ENCODE measurements at regions of chr10 and their contacts with region 1.

Region 1: DNA sequence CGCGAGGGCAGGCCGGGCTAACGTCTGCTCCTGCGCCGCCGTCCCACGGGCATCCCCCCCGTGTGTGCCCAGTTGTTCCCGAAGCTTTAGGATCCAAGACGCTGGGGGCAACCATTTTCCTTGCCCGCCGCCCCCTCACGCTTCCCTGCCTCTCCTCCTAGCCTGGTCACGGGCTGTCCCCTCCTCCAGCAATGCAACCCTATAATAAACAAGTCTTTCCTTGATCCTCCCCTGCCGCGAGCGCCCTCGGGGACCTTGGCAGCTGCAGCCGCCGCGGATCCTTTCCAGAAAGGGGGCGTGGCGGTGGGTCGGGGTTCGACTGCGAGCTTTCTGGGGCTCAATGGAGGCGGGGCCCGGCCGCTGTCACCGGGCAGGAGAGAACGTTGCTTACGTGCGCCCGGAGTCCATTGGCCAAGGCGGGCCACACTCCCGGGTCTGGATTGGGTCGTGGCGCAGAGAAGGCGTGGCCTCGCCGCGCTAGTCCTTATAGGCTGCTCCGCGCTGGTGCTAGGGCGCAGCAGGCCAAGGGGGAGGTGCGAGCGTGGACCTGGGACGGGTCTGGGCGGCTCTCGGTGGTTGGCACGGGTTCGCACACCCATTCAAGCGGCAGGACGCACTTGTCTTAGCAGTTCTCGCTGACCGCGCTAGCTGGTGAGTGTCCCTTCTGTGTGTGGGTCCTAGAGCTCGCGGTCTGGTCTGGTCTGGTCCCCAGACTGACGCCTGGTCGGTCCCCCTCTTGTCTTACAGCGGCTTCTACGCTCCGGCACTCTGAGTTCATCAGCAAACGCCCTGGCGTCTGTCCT is at the start of gene DDIT4:
- DNase-seq: peak; percentile 99
- H3K4me3 ChIP-seq: peak within 1 kb of the TSS; percentile 37 to 68 (median 66)
- H3K27ac ChIP-seq: peak within 1 kb of the TSS; percentile 59
- H3K4me1 ChIP-seq: peaks cover 23% of the 10 kb centered on the region
- H3K27me3 ChIP-seq: no peaks in the 10 kb centered on the region
- CTCF ChIP-seq: no peak
- POLR2A ChIP-seq: peak; percentile 100
- total RNA-seq, gene DDIT4: 53.0 and 60.4 TPM in 2 replicates

Region 2: DNA sequence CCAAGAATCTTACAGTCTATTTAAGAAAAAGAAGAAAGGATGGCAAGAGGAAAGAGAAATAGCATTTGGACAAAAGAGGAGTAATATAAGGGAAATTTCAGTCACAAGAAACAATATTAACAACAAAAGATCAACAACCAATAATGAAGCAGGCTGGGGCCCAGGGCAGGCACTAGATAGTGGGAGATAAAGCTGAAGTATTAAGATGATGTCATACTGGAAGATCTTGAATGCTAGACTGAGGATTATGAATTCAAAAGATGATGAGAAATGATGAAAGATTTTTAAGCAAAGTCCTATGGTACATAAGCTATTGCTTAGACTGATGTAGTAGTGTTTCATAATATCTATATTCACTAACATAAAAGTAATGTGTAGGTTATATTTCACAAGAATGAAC is 133.4 kb before region 1 on chr10:
- CTCF ChIA-PET with region 1: no interaction called
- POLR2A ChIA-PET with region 1: no interaction called
- dilution Hi-C with region 1: no loop called
- intact Hi-C with region 1: no loop called
- DNase-seq: no peak
- H3K4me3 ChIP-seq: no peak overlapping the region
- H3K27ac ChIP-seq: no peak overlapping the region
- H3K4me1 ChIP-seq: no peaks in the 10 kb centered on the region
- H3K27me3 ChIP-seq: no peaks in the 10 kb centered on the region
- CTCF ChIP-seq: no peak
- POLR2A ChIP-seq: no peak

Region 3: GRCh38 chr10:72223743-72224101 is 49.9 kb before region 1 on chr10:
- CTCF ChIA-PET with region 1: interaction called, 10 read pairs
- POLR2A ChIA-PET with region 1: interaction called, 8 read pairs
- dilution Hi-C with region 1: no loop called
- intact Hi-C with region 1: loop called (anchors 1 kb)
- DNase-seq: peak; percentile 59
- H3K4me3 ChIP-seq: no peak overlapping the region
- H3K27ac ChIP-seq: peak overlapping the region; percentile 67
- H3K4me1 ChIP-seq: peaks cover 11% of the 10 kb centered on the region
- H3K27me3 ChIP-seq: no peaks in the 10 kb centered on the region
- CTCF ChIP-seq: no peak
- POLR2A ChIP-seq: no peak

Region 4: GRCh38 chr10:72254813-72255568 is 18.6 kb before region 1 on chr10:
- CTCF ChIA-PET with region 1: interaction called, 13 read pairs
- POLR2A ChIA-PET with region 1: interaction called, 23 read pairs
- dilution Hi-C with region 1: no loop called
- intact Hi-C with region 1: loop called (anchors 1 kb)
- DNase-seq: peak; percentile 52
- H3K4me3 ChIP-seq: no peak overlapping the region
- H3K27ac ChIP-seq: peak overlapping the region; percentile 42
- H3K4me1 ChIP-seq: peaks cover 13% of the 10 kb centered on the region
- H3K27me3 ChIP-seq: no peaks in the 10 kb centered on the region
- CTCF ChIP-seq: no peak
- POLR2A ChIP-seq: peak; percentile 51

Region 5: GRCh38 chr10:72297968-72298773 is 24.6 kb after region 1 on chr10:
- CTCF ChIA-PET with region 1: interaction called, 15 read pairs
- POLR2A ChIA-PET with region 1: interaction called, 22 read pairs
- dilution Hi-C with region 1: no loop called
- intact Hi-C with region 1: loop called (anchors 1 kb)
- DNase-seq: peak; percentile 97
- H3K4me3 ChIP-seq: peak overlapping the region in 2 of 3 experiments; percentile 34 to 44
- H3K27ac ChIP-seq: peak overlapping the region; percentile 88
- H3K4me1 ChIP-seq: peaks cover 15% of the 10 kb centered on the region
- H3K27me3 ChIP-seq: no peaks in the 10 kb centered on the region
- CTCF ChIP-seq: no peak
- POLR2A ChIP-seq: no peak

Region 6: DNA sequence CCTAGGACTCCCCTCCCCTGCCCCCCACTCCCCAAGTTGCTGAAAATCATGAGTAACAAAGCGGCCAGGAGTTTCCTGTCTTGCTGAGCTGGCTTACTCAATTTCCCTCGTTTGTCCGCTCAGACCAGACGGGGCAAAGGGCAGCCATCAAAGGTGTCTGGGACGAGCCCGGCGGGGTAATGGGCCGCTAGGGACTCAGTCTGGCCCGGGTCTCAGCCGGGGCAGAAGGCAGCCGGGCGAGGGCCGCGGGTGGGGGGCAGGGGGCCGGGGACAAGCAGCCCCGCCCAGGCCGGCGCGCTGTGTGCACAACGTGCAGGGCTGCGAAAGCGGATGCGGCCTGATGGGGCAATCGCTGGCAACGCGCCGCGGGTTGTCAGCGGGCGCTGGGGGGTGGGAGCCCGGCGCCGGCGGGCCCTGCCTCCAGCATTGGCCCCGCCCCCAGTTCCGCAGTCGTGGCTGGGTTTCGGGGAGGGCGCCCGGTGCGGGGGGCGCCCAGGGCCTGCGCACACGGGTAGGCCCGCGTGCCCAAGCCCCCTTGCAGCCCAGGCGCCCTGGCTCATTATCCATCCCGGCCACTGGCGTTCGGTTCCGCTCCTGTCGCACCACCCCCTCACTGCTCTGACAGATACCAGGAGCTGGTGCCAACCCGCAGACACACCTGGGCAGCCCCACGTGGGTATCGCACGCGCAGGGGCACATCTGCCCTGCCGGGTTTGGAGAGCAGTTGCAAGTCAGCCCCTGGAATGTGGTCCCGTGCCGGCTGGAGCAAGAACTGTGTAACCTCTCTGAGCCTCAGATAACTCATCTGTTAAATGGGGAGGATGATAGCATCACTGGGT is 46.0 kb after region 1 on chr10:
- CTCF ChIA-PET with region 1: interaction called, 72 read pairs
- POLR2A ChIA-PET with region 1: interaction called, 59 read pairs
- dilution Hi-C with region 1: no loop called
- intact Hi-C with region 1: loop called (anchors 1 kb)
- DNase-seq: peak; percentile 98
- H3K4me3 ChIP-seq: no peak overlapping the region
- H3K27ac ChIP-seq: peak overlapping the region; percentile 100
- H3K4me1 ChIP-seq: peaks cover 69% of the 10 kb centered on the region
- H3K27me3 ChIP-seq: no peaks in the 10 kb centered on the region
- CTCF ChIP-seq: no peak
- POLR2A ChIP-seq: no peak

Region 7: DNA sequence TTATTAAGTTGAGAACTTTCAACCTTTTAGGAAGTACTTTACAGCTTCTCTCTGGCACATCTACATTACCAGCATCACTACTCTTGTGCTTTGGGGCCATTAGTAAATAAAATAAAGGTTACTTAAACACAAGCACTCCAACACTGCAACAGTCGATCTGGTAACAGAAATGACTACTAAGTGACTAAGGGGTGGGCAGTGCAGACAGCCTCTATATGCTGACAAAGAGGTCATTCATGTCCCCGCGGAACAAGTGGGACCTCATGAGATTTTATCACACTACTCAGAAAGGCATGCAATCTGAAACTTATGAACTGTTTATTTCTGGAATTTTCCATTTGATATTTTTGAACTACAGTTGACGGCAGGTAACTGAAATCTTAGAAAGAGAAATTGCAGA is 192.4 kb after region 1 on chr10:
- CTCF ChIA-PET with region 1: no interaction called
- POLR2A ChIA-PET with region 1: no interaction called
- dilution Hi-C with region 1: no loop called
- intact Hi-C with region 1: no loop called
- DNase-seq: no peak
- H3K4me3 ChIP-seq: no peak overlapping the region
- H3K27ac ChIP-seq: no peak overlapping the region
- H3K4me1 ChIP-seq: no peaks in the 10 kb centered on the region
- H3K27me3 ChIP-seq: no peaks in the 10 kb centered on the region
- CTCF ChIP-seq: no peak
- POLR2A ChIP-seq: no peak